Gastrocnemius medialis (tissue), 4 donors: ENCODE measurements at regions of chr13 and their contacts with region 1.

Region 1: DNA sequence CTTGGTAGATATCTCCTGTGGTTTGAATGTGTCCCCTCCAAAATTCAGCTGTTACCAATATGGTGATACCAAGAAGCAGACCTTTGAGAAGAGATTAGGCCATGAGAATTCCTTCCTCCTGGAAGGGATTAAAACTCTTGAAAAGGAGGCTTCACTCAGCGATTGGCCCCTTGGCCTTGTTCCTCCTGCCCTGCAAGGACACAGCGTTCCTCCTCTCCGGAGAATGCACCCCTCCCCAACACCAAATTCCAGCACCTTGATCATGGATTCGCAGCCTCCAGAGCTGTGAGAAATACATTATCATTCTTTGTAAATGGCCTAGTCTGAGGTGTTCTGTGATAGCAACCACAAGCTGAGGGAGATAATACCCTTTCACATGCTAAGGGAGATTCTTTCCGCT is 34.5 kb upstream of the ARHGEF7 start:
- DNase-seq: no peak
- ATAC-seq: no peak
- H3K4me3 ChIP-seq: no peak overlapping the region
- H3K27ac ChIP-seq: no peak overlapping the region
- H3K4me1 ChIP-seq: no peaks in the 10 kb centered on the region
- H3K27me3 ChIP-seq: no peaks in the 10 kb centered on the region
- CTCF ChIP-seq: no peak
- POLR2A ChIP-seq: no peak

Region 2: GRCh38 chr13:112942689-112943308 is 1862.2 kb after region 1 on chr13:
- in situ Hi-C with region 1: no loop called
- intact Hi-C with region 1: loop called (anchors 10 kb)
- DNase-seq: peak; percentile 82 to 89
- ATAC-seq: peak; percentile 95 to 97
- H3K4me3 ChIP-seq: peak overlapping the region; percentile 49 to 62 (median 52)
- H3K27ac ChIP-seq: peak overlapping the region in 2 of 4 donors; percentile 36 to 69
- H3K4me1 ChIP-seq: peaks cover 3 to 7% of the 10 kb centered on the region in 2 donors
- H3K27me3 ChIP-seq: peaks cover 0 to 16% (median 9%) of the 10 kb centered on the region in 3 donors
- CTCF ChIP-seq: peak; percentile 69 to 96 (median 82)
- POLR2A ChIP-seq: no peak